ENCODE measurements at regions of chr10 and their contacts with region 1.

Region 1: GRCh38 chr10:69362468-69362954 is 54.2 kb downstream of the TACR2 start:
- DNase-seq: peak; percentile 87 to 95
- ATAC-seq: peak; percentile 71 to 78
- H3K4me3 ChIP-seq: peak overlapping the region in 2 of 4 donors; percentile 0 to 14
- H3K27ac ChIP-seq: peak overlapping the region; percentile 89 to 93 (median 92)
- H3K4me1 ChIP-seq: peaks cover 72 to 80% of the 10 kb centered on the region in 2 donors
- H3K27me3 ChIP-seq: no peaks in the 10 kb centered on the region
- CTCF ChIP-seq: no peak
- POLR2A ChIP-seq: peak; percentile 80 to 83

Region 2: DNA sequence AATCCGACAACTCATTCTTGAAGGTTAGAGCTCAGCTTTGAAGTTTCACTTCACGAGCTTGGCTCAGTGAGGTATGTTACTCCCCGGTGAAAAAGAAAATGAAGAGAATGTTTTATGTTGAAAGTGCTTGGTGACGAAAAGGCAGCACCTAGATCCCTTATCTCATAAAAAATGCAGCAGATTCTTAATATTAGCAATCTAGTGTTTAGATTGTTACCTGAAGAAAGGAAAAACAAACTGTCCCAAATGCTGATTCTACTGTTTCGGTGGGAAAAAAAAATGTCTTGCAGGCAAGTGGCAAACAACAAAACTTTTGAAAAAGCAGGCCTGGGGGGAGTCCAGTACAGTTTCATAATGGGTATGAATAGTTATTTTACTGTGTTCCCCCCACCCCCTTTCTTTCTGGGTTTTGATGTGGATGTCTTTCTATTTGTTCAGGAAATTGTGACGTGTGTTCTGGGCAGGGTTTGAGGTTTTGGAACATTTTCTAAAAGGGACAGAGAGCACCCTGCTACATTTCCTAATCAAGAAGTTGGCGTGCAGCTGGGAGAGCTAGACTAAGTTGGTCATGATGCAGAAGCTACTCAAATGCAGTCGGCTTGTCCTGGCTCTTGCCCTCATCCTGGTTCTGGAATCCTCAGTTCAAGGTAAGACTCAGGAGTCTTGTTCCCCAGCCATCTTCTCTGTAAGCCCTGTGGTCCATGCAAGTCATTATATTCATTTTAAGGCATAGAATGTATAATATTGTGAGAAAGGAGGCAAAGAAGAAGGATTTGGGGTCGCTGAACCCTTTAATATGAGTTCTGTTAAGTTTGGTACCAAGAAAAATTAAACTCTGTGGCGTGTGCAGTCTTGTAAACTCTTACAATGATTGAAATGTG is 274.7 kb before region 1 on chr10 and contains the start of gene SRGN:
- in situ Hi-C with region 1: no loop called
- intact Hi-C with region 1: no loop called
- DNase-seq: peak; percentile 54 to 65
- ATAC-seq: peak; percentile 77 to 82
- H3K4me3 ChIP-seq: peak within 1 kb of the TSS; percentile 39 to 58 (median 47)
- H3K27ac ChIP-seq: peak within 1 kb of the TSS; percentile 79 to 85 (median 83)
- H3K4me1 ChIP-seq: peaks cover 7 to 11% of the 10 kb centered on the region in 2 donors
- H3K27me3 ChIP-seq: no peaks in the 10 kb centered on the region
- CTCF ChIP-seq: no peak
- POLR2A ChIP-seq: peak; percentile 69 to 88
- total RNA-seq, gene SRGN: 27.1 to 73.1 (median 37.8) TPM

Region 3: GRCh38 chr10:69318106-69318866 is 44.2 kb before region 1 on chr10:
- in situ Hi-C with region 1: no loop called
- intact Hi-C with region 1: loop called (anchors 2 kb)
- DNase-seq: peak; percentile 88 to 89
- ATAC-seq: peak; percentile 81 to 84
- H3K4me3 ChIP-seq: peak overlapping the region; percentile 92 to 97 (median 96)
- H3K27ac ChIP-seq: peak overlapping the region; percentile 92 to 98 (median 96)
- H3K4me1 ChIP-seq: peaks cover 34 to 41% of the 10 kb centered on the region in 2 donors
- H3K27me3 ChIP-seq: no peaks in the 10 kb centered on the region
- CTCF ChIP-seq: peak in 1 of 5 experiments; percentile 25
- POLR2A ChIP-seq: no peak

Region 4: GRCh38 chr10:69327463-69328379 is 34.8 kb before region 1 on chr10:
- in situ Hi-C with region 1: no loop called
- intact Hi-C with region 1: loop called (anchors 2 kb)
- DNase-seq: peak; percentile 88 to 93
- ATAC-seq: peak; percentile 96
- H3K4me3 ChIP-seq: peak overlapping the region; percentile 50 to 62 (median 53)
- H3K27ac ChIP-seq: peak overlapping the region; percentile 87 to 97 (median 93)
- H3K4me1 ChIP-seq: peaks cover 67 to 91% of the 10 kb centered on the region in 2 donors
- H3K27me3 ChIP-seq: no peaks in the 10 kb centered on the region
- CTCF ChIP-seq: no peak
- POLR2A ChIP-seq: peak; percentile 72 to 81